ENCODE measurements at regions of chr4 and their contacts with region 1.

Region 1: GRCh38 chr4:14877246-14878225 is 124.7 kb upstream of the CPEB2 start:
- DNase-seq: no peak
- H3K4me3 ChIP-seq: no peak overlapping the region
- H3K27ac ChIP-seq: no peak overlapping the region
- H3K4me1 ChIP-seq: 0 out of 2 replicates have a peak, but pooled peaks cover 11% of the 10 kb centered on the region
- H3K27me3 ChIP-seq: no peaks in the 10 kb centered on the region
- CTCF ChIP-seq: no peak

Region 2: DNA sequence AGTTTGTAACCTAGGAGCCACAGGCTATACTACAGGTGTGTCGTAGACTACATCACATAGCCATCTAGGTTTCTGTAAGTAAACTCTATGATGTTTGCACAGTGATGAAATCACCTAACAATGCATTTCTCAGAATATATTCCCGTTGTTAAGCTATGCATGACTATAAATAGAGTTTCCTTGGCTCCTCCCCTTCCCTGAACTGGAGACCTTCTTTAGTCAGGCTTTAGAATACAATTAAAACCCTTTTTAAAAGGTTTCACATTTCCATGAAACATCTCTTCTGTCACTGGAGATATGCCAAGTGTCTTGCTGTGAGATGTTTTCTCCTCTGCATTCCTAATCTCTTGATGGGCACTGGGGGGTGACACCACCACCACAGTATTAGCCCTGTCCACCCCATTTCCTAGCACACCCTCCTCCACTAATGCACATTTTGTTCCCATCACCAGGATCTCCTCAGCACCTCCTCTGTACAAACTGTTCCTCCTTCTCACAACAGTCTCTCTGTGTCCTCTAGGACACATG is 209.8 kb before region 1 on chr4:
- CTCF ChIA-PET with region 1: no interaction called
- POLR2A ChIA-PET with region 1: no interaction called
- intact Hi-C with region 1: no loop called
- DNase-seq: peak; percentile 1 to 77
- H3K4me3 ChIP-seq: no peak overlapping the region
- H3K27ac ChIP-seq: no peak overlapping the region
- H3K4me1 ChIP-seq: peaks cover 6% of the 10 kb centered on the region; the same call in 1 of the 2 replicates
- H3K27me3 ChIP-seq: no peaks in the 10 kb centered on the region
- CTCF ChIP-seq: no peak

Region 3: GRCh38 chr4:14856076-14856933 is 21.2 kb before region 1 on chr4:
- CTCF ChIA-PET with region 1: no interaction called
- POLR2A ChIA-PET with region 1: no interaction called
- intact Hi-C with region 1: loop called (anchors 2 kb)
- DNase-seq: peak; percentile 77 to 94
- H3K4me3 ChIP-seq: no peak overlapping the region
- H3K27ac ChIP-seq: peak overlapping the region; percentile 72
- H3K4me1 ChIP-seq: peaks cover 18% of the 10 kb centered on the region
- H3K27me3 ChIP-seq: no peaks in the 10 kb centered on the region
- CTCF ChIP-seq: no peak

Region 4: DNA sequence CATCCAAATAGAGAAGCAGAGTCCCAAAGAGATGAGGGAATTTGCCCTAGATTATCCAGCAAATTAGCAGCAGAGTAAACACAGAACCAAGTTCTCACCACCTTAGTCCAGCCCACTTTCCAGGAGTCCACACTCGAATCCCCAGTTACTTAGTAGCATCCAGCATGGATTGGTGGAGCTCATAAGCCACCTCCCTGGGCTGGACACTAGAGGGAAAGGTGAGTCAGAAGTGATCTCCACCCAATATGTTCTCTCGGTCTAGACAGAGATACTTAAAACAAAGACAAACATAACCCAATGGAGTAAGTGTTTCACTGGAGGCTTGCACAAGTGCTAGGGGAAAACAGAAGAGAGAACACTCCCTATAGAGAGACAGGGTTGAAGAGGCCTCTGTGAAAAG is 19.7 kb after region 1 on chr4:
- CTCF ChIA-PET with region 1: no interaction called
- POLR2A ChIA-PET with region 1: no interaction called
- intact Hi-C with region 1: no loop called
- DNase-seq: no peak
- H3K4me3 ChIP-seq: no peak overlapping the region
- H3K27ac ChIP-seq: no peak overlapping the region
- H3K4me1 ChIP-seq: 0 out of 2 replicates have a peak, but pooled peaks cover 5% of the 10 kb centered on the region
- H3K27me3 ChIP-seq: no peaks in the 10 kb centered on the region
- CTCF ChIP-seq: no peak

Region 5: GRCh38 chr4:14916554-14917297 is 39.2 kb after region 1 on chr4:
- CTCF ChIA-PET with region 1: no interaction called
- POLR2A ChIA-PET with region 1: no interaction called
- intact Hi-C with region 1: loop called (anchors 2 kb)
- DNase-seq: peak; percentile 65 to 82
- H3K4me3 ChIP-seq: no peak overlapping the region; the same call in 1 of the 2 replicates
- H3K27ac ChIP-seq: peak overlapping the region; percentile 86
- H3K4me1 ChIP-seq: peaks cover 22% of the 10 kb centered on the region
- H3K27me3 ChIP-seq: no peaks in the 10 kb centered on the region
- CTCF ChIP-seq: no peak

Region 6: GRCh38 chr4:14924812-14925344 is 47.3 kb after region 1 on chr4:
- CTCF ChIA-PET with region 1: no interaction called
- POLR2A ChIA-PET with region 1: no interaction called
- intact Hi-C with region 1: loop called (anchors 2 kb)
- DNase-seq: peak; percentile 84 to 90
- H3K4me3 ChIP-seq: no peak overlapping the region
- H3K27ac ChIP-seq: peak overlapping the region; percentile 75
- H3K4me1 ChIP-seq: peaks cover 18% of the 10 kb centered on the region
- H3K27me3 ChIP-seq: no peaks in the 10 kb centered on the region
- CTCF ChIP-seq: no peak

Measured in PC-9 (cell line).